KBM-7 (cell line): ENCODE measurements at regions of chr10 and their contacts with region 1.

Region 1: GRCh38 chr10:71285180-71285545 is 33.9 kb upstream of the SLC29A3 start:
- DNase-seq: peak; percentile 43

Region 2: DNA sequence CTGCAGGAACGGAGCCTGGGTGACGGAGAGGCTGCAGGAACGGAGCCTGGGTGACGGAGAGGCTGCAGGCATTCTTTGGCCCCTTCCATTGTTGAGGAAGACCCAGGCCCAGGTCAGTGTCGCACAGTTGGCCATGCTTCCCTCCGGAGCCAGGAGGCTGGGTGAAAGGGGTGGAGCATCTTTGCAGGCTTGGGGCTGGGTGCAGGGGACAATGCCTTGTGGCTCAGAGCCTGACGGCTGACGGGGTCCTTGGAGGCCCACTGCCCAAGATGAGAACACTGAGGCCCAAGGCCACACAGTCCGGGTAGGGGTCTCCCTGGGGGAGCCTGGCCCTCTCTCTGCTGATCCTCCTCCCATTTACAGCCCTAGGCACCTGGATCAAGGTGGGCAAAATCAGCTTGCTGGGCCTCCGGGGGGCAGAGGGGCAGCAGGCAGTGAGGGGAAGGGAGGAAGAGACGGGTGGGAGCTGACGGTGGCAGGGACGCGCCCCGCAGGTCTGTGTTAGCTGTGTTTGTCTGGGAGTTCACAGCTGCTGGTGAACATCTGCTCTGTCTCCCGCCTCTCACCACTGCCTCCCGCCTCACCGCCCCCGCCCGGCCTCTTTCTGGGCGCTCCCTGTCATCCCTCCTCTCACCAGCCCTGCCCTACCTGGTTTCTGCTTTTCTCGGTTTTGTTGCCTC is 366.2 kb before region 1 on chr10:
- in situ Hi-C with region 1: loop called (anchors 10 kb)
- DNase-seq: no peak